ENCODE measurements at regions of chrX and their contacts with region 1.

Region 1: DNA sequence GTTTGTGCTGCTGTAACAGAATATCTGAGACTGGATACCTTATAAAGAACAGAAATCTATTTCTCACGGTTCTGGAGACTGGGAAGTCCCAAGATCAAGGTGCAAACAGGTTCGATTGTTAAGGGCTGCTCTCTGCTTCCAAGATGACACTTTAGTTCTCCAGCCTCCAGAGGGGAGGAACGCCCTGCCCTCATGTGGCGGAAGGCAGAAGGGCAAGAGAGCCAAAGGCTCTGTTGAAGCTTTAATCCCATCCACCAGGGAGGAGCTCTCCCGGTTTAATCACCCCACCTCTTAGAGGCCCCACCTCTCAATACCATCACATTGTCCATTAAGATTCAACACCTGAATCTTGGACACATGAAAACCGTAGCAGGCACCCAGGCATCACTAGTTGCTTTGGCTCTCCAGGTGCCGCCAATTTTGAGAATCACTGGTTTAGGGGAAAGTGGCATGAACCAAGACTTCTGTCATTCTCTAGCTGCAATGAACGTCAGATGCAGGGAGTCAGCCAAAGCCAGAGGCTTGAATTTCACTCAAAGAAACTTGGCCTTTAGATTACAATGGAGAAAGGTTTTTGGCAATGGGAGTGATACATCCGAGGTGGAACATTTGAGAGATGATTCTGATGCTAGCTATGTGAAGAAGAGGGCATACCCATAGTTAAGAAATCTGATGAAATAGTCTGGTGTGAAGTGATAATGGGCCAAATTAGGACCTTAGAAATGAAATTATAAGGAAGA is 15.7 kb downstream of the FHL1 start:
- H3K4me3 ChIP-seq: no peak overlapping the region
- H3K27ac ChIP-seq: no peak overlapping the region
- H3K4me1 ChIP-seq: peaks cover 2% of the 10 kb centered on the region
- CTCF ChIP-seq: peak; percentile 84

Region 2: DNA sequence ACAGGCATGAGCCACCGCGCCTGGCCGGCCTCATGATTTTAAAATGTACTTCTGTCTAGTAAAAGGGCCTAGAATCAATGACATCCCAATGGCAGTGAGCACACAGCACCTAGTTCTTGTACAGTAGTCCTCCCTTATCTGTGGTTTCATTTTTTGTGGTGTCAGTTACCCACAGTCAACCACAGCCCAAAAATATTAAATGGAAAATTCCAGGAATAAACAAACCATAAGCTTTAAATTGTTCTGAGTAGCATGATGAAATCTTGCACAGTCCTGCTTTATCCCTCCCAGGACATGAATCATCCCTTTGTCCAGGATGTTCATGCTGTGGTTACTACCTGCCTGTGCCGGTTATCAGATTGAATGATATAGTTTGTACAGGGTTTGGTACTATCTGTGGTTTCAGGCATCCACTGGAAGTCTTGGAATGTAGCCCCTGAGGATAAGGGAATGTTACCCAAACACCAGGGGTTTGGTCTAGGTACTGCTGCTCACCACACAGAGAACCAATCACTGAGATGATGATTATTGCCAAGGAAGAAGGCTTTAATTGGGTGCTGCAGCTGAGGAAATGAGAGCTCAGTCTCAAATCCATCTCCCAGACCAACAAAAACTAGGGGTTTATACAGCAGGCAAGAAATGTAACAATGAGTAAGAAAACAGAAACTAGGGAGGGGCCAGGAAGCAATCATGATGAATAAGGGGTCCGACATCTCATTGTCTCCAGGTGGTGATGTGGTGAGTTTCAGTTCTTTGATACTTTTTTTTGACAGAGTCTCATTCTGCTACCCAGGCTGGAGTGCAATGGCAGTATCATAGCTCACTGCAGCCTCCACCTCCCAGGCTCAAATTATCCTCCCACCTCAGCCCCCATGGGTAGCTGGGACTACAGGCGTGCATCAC is 31.8 kb before region 1 on chrX:
- CTCF ChIA-PET with region 1: interaction called, 10 read pairs
- POLR2A ChIA-PET with region 1: interaction called, 3 read pairs
- H3K4me3 ChIP-seq: no peak overlapping the region
- H3K27ac ChIP-seq: peak overlapping the region; percentile 76
- H3K4me1 ChIP-seq: peaks cover 9% of the 10 kb centered on the region
- CTCF ChIP-seq: no peak

Region 3: DNA sequence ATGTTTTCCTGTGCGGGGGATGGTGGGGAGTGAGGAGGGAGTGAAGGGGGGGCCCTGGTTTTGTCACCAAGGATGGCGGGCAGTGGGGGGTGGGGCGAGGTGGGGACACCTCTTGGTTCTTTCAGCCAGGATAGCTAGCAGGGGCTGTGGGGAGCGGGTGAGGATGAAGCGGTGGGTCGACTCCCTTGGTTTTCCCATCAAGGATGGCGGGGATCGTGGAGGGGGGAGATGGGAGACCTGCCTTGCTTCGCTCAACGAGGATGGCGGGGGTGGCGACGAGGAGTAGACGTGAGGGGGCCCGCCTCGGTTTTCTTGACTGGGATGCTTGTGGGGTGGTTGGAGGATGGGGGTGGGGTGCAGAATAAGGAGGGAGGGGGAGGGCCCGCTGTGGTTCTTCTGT is 15.0 kb before region 1 on chrX:
- CTCF ChIA-PET with region 1: interaction called, 15 read pairs
- POLR2A ChIA-PET with region 1: no interaction called
- H3K4me3 ChIP-seq: peak overlapping the region; percentile 63
- H3K27ac ChIP-seq: peak overlapping the region; percentile 99
- H3K4me1 ChIP-seq: peaks cover 10% of the 10 kb centered on the region
- CTCF ChIP-seq: no peak

Region 4: GRCh38 chrX:136209016-136209738 is 46.2 kb after region 1 on chrX:
- CTCF ChIA-PET with region 1: interaction called, 15 read pairs
- POLR2A ChIA-PET with region 1: no interaction called
- H3K4me3 ChIP-seq: no peak overlapping the region
- H3K27ac ChIP-seq: no peak overlapping the region; the same call in 1 of the 2 replicates
- H3K4me1 ChIP-seq: 0 out of 2 replicates have a peak, but pooled peaks cover 3% of the 10 kb centered on the region
- CTCF ChIP-seq: peak; percentile 42; the same call in 1 of the 2 replicates